ENCODE measurements at regions of chr11 and their contacts with region 1.

Region 1: GRCh38 chr11:57667736-57668435 is at the start of gene ZDHHC5:
- DNase-seq: peak; percentile 99
- ATAC-seq: peak; percentile 90
- H3K4me3 Mint-ChIP-seq: peak within 1 kb of the TSS; percentile 98
- H3K27ac Mint-ChIP-seq: peak within 1 kb of the TSS; percentile 96
- H3K4me1 Mint-ChIP-seq: peaks cover 35% of the 10 kb centered on the region
- H3K27me3 Mint-ChIP-seq: no peaks in the 10 kb centered on the region
- total RNA-seq, gene ZDHHC5: 76.3 to 78.4 TPM

Region 2: DNA sequence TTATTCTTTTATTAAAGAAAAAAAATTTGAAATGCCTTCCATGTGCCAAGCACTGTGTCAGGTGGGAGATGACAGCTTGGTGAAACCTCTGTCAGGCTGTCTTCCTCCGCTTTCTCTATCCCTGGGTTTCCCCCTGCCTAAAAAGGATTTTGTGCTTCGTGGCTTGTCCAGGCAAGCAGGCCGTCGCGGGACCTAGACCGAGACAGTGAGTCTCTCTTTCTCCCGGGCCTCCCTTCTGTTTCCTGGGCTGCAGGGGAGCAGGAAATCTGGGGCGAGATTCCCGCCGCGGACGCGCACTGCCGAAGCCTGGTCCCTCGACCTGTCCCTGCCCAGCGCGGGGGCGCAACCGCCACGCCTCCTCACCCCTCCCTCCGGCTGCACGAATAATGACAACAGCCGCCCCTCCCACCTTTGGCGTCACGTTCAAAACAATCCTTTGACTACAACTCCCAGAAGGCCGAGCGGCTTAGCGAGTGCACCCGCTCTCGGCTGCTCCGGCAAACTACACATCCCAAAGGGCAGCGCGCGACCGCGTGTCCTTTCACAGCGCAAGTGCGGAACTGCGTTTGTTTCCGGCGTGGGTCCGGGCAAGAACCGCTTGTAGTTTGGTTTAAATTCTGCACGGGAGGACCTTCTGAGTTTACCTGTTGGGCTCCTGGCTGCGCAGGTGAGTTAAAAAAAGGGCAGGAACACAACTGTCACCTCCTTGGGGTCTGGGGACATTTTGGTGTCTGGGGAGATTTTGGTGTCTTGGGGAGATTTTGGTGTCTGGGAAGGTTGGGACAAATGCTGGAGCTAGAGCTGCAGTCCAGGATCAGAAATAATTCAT is 10.5 kb before region 1 on chr11 and contains the start of gene CLP1:
- POLR2A ChIA-PET with region 1: interaction called, 12 read pairs
- DNase-seq: peak; percentile 95
- ATAC-seq: peak; percentile 96
- H3K4me3 Mint-ChIP-seq: peak within 1 kb of the TSS; percentile 98
- H3K27ac Mint-ChIP-seq: peak within 1 kb of the TSS; percentile 92
- H3K4me1 Mint-ChIP-seq: peaks cover 29% of the 10 kb centered on the region
- H3K27me3 Mint-ChIP-seq: no peaks in the 10 kb centered on the region
- total RNA-seq, gene CLP1: 17.3 to 18.2 TPM